ENCODE measurements at regions of chr4 and their contacts with region 1.

Region 1: GRCh38 chr4:163554870-163555465 is 60.5 kb downstream of the TMA16 start:
- DNase-seq: no peak
- ATAC-seq: no peak
- H3K4me3 ChIP-seq: no peak overlapping the region
- H3K27ac ChIP-seq: no peak overlapping the region
- H3K4me1 ChIP-seq: peaks cover 18% of the 10 kb centered on the region
- H3K27me3 ChIP-seq: no peaks in the 10 kb centered on the region
- CTCF ChIP-seq: peak; percentile 41 to 63 (median 58); a peak in 4 of 6 replicates
- EP300 ChIP-seq: no peak
- POLR2A ChIP-seq: no peak
- RAD21 ChIP-seq: peak; percentile 72

Region 2: GRCh38 chr4:163587867-163588266 is 32.9 kb after region 1 on chr4:
- CTCF ChIA-PET with region 1: interaction called, 94 read pairs
- POLR2A ChIA-PET with region 1: interaction called, 4 read pairs
- RAD21 ChIA-PET with region 1: interaction called, 41 read pairs
- SMC1A ChIA-PET with region 1: interaction called, 80 read pairs
- in situ Hi-C with region 1: no loop called
- intact Hi-C with region 1: loop called (anchors 1 kb)
- DNase-seq: peak; percentile 73
- ATAC-seq: peak; percentile 78
- H3K4me3 ChIP-seq: no peak overlapping the region
- H3K27ac ChIP-seq: peak overlapping the region; percentile 25; the same call in 1 of the 2 replicates
- H3K4me1 ChIP-seq: peaks cover 33% of the 10 kb centered on the region
- H3K27me3 ChIP-seq: no peaks in the 10 kb centered on the region
- CTCF ChIP-seq: peak; percentile 28 to 62 (median 46); a peak in 5 of 6 replicates
- EP300 ChIP-seq: peak; percentile 63 to 78; a peak in 3 of 4 replicates
- POLR2A ChIP-seq: no peak
- RAD21 ChIP-seq: peak; percentile 20; the same call in 1 of the 2 replicates

Region 3: DNA sequence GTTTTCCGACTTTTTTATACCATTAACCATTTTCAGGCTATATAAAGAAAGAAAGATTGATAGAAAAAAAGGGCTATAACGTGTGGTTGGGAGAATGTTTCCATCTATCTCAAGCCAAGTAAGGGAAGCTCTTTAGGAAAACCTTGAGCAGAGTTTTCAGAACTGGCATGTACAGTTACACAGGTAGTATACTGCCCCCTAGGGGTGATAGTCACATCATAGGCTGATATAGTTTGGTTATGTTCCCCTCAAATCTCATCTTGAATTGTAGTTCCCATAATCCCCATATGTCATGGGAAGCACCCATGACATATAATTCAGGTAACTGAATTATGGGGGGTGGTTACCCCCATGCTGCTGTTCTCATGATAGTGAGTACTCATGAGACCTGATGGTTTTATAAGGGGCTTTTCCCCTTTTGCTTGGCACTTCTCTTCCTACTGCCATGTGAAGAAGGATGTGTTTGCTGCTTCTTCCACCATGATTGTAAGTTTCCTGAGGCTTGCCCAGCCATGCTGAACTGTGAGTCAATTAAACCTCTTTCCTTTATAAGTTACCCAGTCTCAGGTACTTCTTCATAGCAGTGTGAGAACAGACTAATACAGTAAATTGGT is 126.3 kb after region 1 on chr4:
- CTCF ChIA-PET with region 1: interaction called, 571 read pairs
- POLR2A ChIA-PET with region 1: interaction called, 5 read pairs
- RAD21 ChIA-PET with region 1: interaction called, 247 read pairs
- SMC1A ChIA-PET with region 1: interaction called, 727 read pairs
- in situ Hi-C with region 1: no loop called
- intact Hi-C with region 1: loop called (anchors 1 kb)
- DNase-seq: no peak
- ATAC-seq: peak; percentile 93
- H3K4me3 ChIP-seq: no peak overlapping the region
- H3K27ac ChIP-seq: no peak overlapping the region
- H3K4me1 ChIP-seq: no peaks in the 10 kb centered on the region
- H3K27me3 ChIP-seq: no peaks in the 10 kb centered on the region
- CTCF ChIP-seq: peak; percentile 58 to 61 (median 60)
- EP300 ChIP-seq: no peak
- POLR2A ChIP-seq: no peak
- RAD21 ChIP-seq: peak; percentile 89

Region 4: DNA sequence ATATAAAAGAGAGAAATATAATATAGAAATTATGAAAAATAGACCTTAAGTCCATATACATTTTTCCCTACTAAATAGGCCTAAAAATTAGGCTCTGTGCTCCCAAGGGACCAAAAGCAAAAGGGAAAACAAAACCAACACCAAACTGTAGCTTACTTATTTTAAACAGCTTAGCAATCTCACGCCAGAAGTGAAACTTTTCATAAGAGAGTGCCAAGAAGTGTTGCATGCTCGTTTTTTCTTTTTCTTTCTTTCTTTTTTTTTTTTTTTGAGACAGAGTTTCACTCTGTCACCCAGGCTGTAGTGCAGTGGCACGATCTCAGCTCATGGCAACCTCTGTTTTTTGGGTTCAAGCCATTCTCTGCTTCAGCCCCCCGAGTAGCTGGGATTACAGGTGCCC is 189.9 kb after region 1 on chr4:
- CTCF ChIA-PET with region 1: interaction called, 134 read pairs
- POLR2A ChIA-PET with region 1: no interaction called
- RAD21 ChIA-PET with region 1: interaction called, 14 read pairs
- SMC1A ChIA-PET with region 1: interaction called, 54 read pairs
- in situ Hi-C with region 1: no loop called
- intact Hi-C with region 1: no loop called
- DNase-seq: peak; percentile 57
- ATAC-seq: peak; percentile 94
- H3K4me3 ChIP-seq: 0 out of 2 replicates have a peak overlapping the region, but pooled peaks have one; percentile 5
- H3K27ac ChIP-seq: peak overlapping the region; percentile 57
- H3K4me1 ChIP-seq: peaks cover 10% of the 10 kb centered on the region
- H3K27me3 ChIP-seq: no peaks in the 10 kb centered on the region
- CTCF ChIP-seq: no peak
- EP300 ChIP-seq: peak; percentile 22 to 58; a peak in 2 of 4 replicates
- POLR2A ChIP-seq: no peak
- RAD21 ChIP-seq: no peak

Region 5: DNA sequence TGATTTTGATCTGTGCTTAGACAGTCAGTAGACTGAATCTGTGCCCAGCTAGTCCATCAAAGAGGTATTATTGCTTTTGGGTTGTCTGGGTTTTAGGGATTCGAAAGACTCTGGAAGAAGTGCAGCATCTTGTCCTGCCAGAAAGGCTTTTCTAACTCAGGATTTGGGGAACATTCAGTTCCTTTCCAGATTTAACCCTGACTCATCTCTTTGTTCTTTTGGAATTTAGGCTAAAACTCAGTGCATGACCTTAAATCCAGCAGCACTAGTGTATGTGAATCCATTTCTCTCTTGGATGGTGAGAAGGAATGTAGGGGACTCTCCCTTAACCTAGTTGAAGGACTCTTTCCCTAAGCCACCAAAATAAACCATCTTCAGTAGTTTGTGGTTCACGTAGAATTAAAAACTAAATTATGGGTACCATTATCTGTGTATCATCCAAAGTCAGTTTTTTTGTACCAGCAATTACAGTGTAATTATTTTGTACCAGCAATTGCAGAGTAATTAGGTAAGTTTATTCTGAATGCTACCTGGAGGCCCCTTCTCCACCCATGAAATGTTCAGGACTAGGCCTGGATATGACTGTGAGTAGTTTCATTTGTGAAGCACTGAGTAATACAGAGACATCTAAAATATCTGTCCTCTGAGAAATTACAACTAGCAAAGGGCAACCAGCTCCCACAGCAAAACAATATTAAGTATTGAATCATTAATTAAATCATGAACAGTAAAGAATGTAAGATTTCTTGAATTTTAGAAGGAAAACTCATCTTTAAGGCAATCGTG is 323.6 kb after region 1 on chr4:
- CTCF ChIA-PET with region 1: no interaction called
- POLR2A ChIA-PET with region 1: no interaction called
- RAD21 ChIA-PET with region 1: no interaction called
- SMC1A ChIA-PET with region 1: no interaction called
- in situ Hi-C with region 1: no loop called
- intact Hi-C with region 1: loop called (anchors 10 kb)
- DNase-seq: no peak
- ATAC-seq: no peak
- H3K4me3 ChIP-seq: no peak overlapping the region
- H3K27ac ChIP-seq: no peak overlapping the region
- H3K4me1 ChIP-seq: no peaks in the 10 kb centered on the region
- H3K27me3 ChIP-seq: no peaks in the 10 kb centered on the region
- CTCF ChIP-seq: no peak
- EP300 ChIP-seq: no peak
- POLR2A ChIP-seq: no peak
- RAD21 ChIP-seq: no peak

Region 6: DNA sequence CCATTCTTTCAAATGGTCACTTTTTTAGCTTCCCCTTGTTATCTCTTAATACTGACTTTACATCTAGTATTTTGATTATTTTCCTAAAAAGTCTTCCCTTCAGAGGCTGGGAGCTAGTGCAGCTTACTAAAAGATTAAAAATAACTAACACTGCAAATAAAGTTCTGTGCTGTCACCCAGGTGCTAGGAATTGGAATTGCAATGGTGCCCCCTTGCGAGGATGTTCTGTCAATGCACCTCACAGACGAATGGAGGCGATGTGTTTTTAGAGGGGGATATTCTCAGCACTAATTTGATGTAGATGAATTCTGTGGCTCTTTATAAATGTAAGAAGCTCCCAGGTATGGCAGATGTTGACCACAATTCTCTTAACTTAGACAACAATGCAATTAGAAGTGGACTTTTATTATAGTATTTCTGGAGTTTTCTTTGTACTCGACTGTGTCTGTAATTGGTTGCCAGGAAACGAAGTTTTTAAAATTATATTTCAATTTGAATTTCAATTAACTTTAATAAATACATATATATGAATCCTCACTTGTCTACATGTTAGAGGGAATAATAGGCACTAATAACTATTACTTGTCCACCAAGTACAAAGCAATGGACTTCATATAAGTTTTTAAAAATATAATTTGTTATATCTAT is 1177.0 kb after region 1 on chr4:
- CTCF ChIA-PET with region 1: interaction called, 43 read pairs
- POLR2A ChIA-PET with region 1: interaction called, 3 read pairs
- RAD21 ChIA-PET with region 1: interaction called, 18 read pairs
- SMC1A ChIA-PET with region 1: interaction called, 27 read pairs
- in situ Hi-C with region 1: loop called (anchors 10 kb)
- intact Hi-C with region 1: loop called (anchors 5 kb)
- DNase-seq: peak; percentile 3
- ATAC-seq: peak; percentile 85
- H3K4me3 ChIP-seq: no peak overlapping the region
- H3K27ac ChIP-seq: no peak overlapping the region
- H3K4me1 ChIP-seq: no peaks in the 10 kb centered on the region
- H3K27me3 ChIP-seq: no peaks in the 10 kb centered on the region; a peak in 1 of 4 replicates
- CTCF ChIP-seq: peak; percentile 82 to 88 (median 82)
- EP300 ChIP-seq: no peak
- POLR2A ChIP-seq: no peak
- RAD21 ChIP-seq: peak; percentile 92